ENCODE measurements at regions of chr6 and their contacts with region 1.

Region 1: DNA sequence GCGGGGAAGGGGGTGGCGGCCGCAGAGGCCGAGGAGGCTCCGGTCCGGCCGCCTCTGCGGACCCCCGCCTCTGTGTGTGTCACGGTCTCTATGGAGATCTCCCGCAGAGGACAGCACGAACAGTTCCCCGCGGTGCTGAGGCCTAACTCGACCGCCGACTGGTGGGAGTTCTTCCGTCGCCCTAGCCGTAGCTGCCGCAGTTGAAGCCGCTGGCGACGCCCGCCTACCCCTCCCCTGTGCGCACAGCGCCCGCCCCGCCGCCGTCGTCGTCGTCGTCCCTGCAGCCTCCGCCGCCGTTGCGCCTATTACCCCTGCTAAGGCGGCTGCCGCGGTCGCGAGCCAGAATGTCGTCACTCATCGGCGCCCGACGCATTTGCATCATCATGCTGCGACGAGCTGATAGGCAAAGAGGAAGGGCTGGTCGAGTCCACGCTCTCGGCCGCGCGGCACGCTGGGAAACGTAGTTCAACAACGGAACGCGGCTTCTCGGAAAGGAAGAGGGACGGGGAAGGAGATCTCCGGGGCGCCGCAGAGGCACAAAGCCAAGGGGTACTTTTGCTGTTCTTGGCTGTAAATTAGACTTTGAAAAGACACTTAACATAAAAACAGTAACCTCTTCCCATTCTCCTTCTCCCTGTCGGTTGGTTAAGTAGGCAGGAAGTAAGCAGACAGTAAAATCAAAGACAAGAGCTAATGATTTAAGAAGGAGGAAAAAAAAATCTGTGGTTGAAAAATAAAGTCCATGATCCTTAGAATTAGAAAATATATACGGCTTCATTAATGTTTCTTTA is at the start of gene NUP153:
- DNase-seq: peak; percentile 100
- ATAC-seq: peak; percentile 67
- H3K4me3 Mint-ChIP-seq: peak within 1 kb of the TSS; percentile 89
- H3K27ac Mint-ChIP-seq: peak within 1 kb of the TSS; percentile 95
- H3K4me1 Mint-ChIP-seq: peaks cover 44% of the 10 kb centered on the region
- H3K27me3 Mint-ChIP-seq: no peaks in the 10 kb centered on the region
- CTCF ChIP-seq: no peak
- total RNA-seq, gene NUP153: 59.2 and 63.8 TPM in 2 replicates

Region 2: DNA sequence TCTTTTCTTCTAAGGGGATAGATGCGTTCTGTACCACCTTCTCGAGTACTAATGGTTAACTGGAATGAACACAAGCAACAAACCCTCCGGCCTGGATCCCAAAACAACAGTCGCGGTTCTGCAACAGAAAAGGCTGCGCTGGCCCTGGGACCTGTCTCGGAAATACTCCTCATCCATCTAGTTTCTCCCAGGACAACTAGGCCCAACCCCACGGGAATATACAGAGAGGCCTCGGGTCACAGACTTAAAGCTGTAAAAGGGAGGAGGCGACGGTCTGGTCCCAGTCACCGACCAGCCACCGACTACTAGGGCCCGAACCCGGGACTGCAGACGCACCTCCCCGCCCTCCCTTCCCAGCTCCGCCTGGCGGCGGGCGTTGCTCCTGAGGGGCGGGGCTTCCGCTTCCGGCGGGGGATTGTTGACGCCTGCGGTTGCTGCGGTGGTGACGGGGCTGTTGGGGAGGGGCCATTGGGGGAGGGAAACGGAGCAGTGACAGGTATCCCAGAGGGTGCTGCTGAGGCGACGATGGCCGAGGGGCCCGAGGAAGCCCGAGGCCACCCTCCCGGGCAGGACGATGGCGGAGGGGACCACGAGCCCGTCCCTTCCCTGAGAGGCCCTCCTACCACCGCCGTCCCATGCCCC is 106.8 kb before region 1 on chr6 and contains the start of gene FAM8A1:
- CTCF ChIA-PET with region 1: no interaction called
- POLR2A ChIA-PET with region 1: interaction called, 30 read pairs
- intact Hi-C with region 1: loop called (anchors 1 kb)
- DNase-seq: peak; percentile 88
- ATAC-seq: peak; percentile 91
- H3K4me3 Mint-ChIP-seq: peak within 1 kb of the TSS; percentile 80
- H3K27ac Mint-ChIP-seq: peak within 1 kb of the TSS; percentile 78
- H3K4me1 Mint-ChIP-seq: peaks cover 11% of the 10 kb centered on the region
- H3K27me3 Mint-ChIP-seq: no peaks in the 10 kb centered on the region
- CTCF ChIP-seq: no peak
- total RNA-seq, gene FAM8A1: 2.6 and 3.0 TPM in 2 replicates

Region 3: GRCh38 chr6:17808609-17809008 is 101.8 kb after region 1 on chr6:
- CTCF ChIA-PET with region 1: interaction called, 9 read pairs
- POLR2A ChIA-PET with region 1: no interaction called
- intact Hi-C with region 1: loop called (anchors 2 kb)
- DNase-seq: no peak
- ATAC-seq: no peak
- H3K4me3 Mint-ChIP-seq: no peak overlapping the region
- H3K27ac Mint-ChIP-seq: no peak overlapping the region
- H3K4me1 Mint-ChIP-seq: no peaks in the 10 kb centered on the region
- H3K27me3 Mint-ChIP-seq: no peaks in the 10 kb centered on the region
- CTCF ChIP-seq: no peak

Region 4: GRCh38 chr6:17987576-17988421 is 281.0 kb after region 1 on chr6 and contains the start of gene KIF13A:
- CTCF ChIA-PET with region 1: no interaction called
- POLR2A ChIA-PET with region 1: no interaction called
- intact Hi-C with region 1: loop called (anchors 1 kb)
- DNase-seq: peak; percentile 72
- ATAC-seq: peak; percentile 76
- H3K4me3 Mint-ChIP-seq: peak within 1 kb of the TSS; percentile 91
- H3K27ac Mint-ChIP-seq: peak within 1 kb of the TSS; percentile 88
- H3K4me1 Mint-ChIP-seq: peaks cover 32% of the 10 kb centered on the region
- H3K27me3 Mint-ChIP-seq: no peaks in the 10 kb centered on the region
- CTCF ChIP-seq: no peak
- total RNA-seq, gene KIF13A: 13.1 and 14.1 TPM in 2 replicates

Region 5: GRCh38 chr6:17998456-17998855 is 291.7 kb after region 1 on chr6:
- CTCF ChIA-PET with region 1: no interaction called
- POLR2A ChIA-PET with region 1: no interaction called
- intact Hi-C with region 1: no loop called
- DNase-seq: no peak
- ATAC-seq: no peak
- H3K4me3 Mint-ChIP-seq: no peak overlapping the region
- H3K27ac Mint-ChIP-seq: no peak overlapping the region
- H3K4me1 Mint-ChIP-seq: peaks cover 3% of the 10 kb centered on the region
- H3K27me3 Mint-ChIP-seq: peaks cover 21% of the 10 kb centered on the region
- CTCF ChIP-seq: no peak

Region 6: GRCh38 chr6:18155150-18155863 is 448.5 kb after region 1 on chr6 and contains the start of gene KDM1B:
- CTCF ChIA-PET with region 1: no interaction called
- POLR2A ChIA-PET with region 1: interaction called, 15 read pairs
- intact Hi-C with region 1: loop called (anchors 1 kb)
- DNase-seq: peak; percentile 96
- ATAC-seq: peak; percentile 91
- H3K4me3 Mint-ChIP-seq: peak within 1 kb of the TSS; percentile 97
- H3K27ac Mint-ChIP-seq: peak within 1 kb of the TSS; percentile 93
- H3K4me1 Mint-ChIP-seq: peaks cover 28% of the 10 kb centered on the region
- H3K27me3 Mint-ChIP-seq: no peaks in the 10 kb centered on the region
- CTCF ChIP-seq: no peak
- total RNA-seq, gene KDM1B: 19.6 and 21.0 TPM in 2 replicates

Measured in activated B cell treated with CpG ODN at 0.5 μM for 24 hours (primary cell).